GM12878 (cell line): ENCODE measurements at regions of chr7 and their contacts with region 1.

Region 1: DNA sequence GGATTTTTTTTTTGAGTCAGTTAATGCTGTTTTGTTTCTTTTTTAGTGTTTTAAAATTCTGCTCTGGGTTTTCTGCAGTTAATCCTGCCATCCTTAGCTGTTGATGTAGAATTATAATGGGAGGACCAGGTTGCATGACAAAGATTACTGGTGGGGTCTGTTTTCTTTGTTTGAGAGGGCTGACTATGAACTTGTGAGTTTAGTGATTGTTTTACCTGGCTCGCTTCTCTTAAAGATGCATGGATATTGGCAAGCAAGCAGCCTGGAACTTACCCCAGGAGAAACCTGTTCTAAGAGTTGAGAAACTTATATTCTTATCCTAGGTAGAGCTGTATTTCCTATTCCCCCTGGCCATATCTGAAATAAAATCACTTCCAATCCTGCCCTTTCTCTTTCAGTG is 727.8 kb downstream of the GRM8 start:
- DNase-seq: no peak
- ATAC-seq: no peak
- H3K4me3 ChIP-seq: no peak overlapping the region
- H3K27ac ChIP-seq: no peak overlapping the region
- H3K4me1 ChIP-seq: no peaks in the 10 kb centered on the region
- H3K27me3 ChIP-seq: no peaks in the 10 kb centered on the region
- CTCF ChIP-seq: no peak
- EP300 ChIP-seq: no peak
- POLR2A ChIP-seq: no peak
- RAD21 ChIP-seq: no peak

Region 2: DNA sequence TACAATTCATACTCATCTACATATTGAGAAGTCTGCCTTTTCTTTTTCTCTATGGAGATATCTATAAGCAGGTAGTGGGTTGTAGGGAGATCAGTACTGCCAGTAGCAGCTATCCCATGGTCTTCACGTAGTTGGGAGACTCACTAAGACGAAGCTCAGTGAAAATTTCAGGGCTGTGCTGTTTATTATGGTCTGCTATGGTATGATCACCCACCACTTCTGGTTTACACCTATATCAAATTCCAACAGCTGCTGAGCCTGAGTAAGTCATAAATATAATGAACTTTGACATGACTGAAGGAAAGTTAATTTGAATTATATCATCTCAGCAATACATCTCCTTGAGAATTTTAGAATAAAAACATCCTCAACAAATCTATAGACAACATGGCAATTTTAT is 13.9 kb before region 1 on chr7:
- CTCF ChIA-PET with region 1: interaction called, 3 read pairs
- POLR2A ChIA-PET with region 1: no interaction called
- RAD21 ChIA-PET with region 1: no interaction called
- SMC1A ChIA-PET with region 1: interaction called, 10 read pairs
- in situ Hi-C with region 1: no loop called
- intact Hi-C with region 1: no loop called
- DNase-seq: no peak
- ATAC-seq: no peak
- H3K4me3 ChIP-seq: no peak overlapping the region
- H3K27ac ChIP-seq: no peak overlapping the region
- H3K4me1 ChIP-seq: no peaks in the 10 kb centered on the region
- H3K27me3 ChIP-seq: no peaks in the 10 kb centered on the region
- CTCF ChIP-seq: no peak
- EP300 ChIP-seq: no peak
- POLR2A ChIP-seq: no peak
- RAD21 ChIP-seq: no peak